ENCODE measurements at regions of chr3 and their contacts with region 1.

Region 1: GRCh38 chr3:157136647-157137387 is 23.1 kb downstream of the CCNL1 start:
- DNase-seq: no peak
- ATAC-seq: peak; percentile 16
- H3K4me3 ChIP-seq: no peak overlapping the region
- H3K4me3 Mint-ChIP-seq: no peak overlapping the region
- H3K27ac ChIP-seq: peak overlapping the region in 1 of 2 experiments; percentile 13
- H3K27ac Mint-ChIP-seq: peak overlapping the region; percentile 74
- H3K4me1 ChIP-seq: peaks cover 17% of the 10 kb centered on the region
- H3K4me1 Mint-ChIP-seq: peaks cover 37% of the 10 kb centered on the region
- H3K27me3 ChIP-seq: no peaks in the 10 kb centered on the region
- H3K27me3 Mint-ChIP-seq: no peaks in the 10 kb centered on the region
- CTCF ChIP-seq: no peak

Region 2: GRCh38 chr3:156449712-156450574 is 686.9 kb before region 1 on chr3:
- CTCF ChIA-PET with region 1: interaction called, 3 read pairs
- POLR2A ChIA-PET with region 1: no interaction called
- intact Hi-C with region 1: loop called (anchors 1 to 5 kb)
- DNase-seq: peak in 2 of 9 experiments; percentile 16 to 29
- ATAC-seq: no peak
- H3K4me3 ChIP-seq: no peak overlapping the region
- H3K4me3 Mint-ChIP-seq: no peak overlapping the region
- H3K27ac ChIP-seq: no peak overlapping the region
- H3K27ac Mint-ChIP-seq: no peak overlapping the region
- H3K4me1 ChIP-seq: no peaks in the 10 kb centered on the region
- H3K4me1 Mint-ChIP-seq: no peaks in the 10 kb centered on the region
- H3K27me3 ChIP-seq: no peaks in the 10 kb centered on the region
- H3K27me3 Mint-ChIP-seq: no peaks in the 10 kb centered on the region
- CTCF ChIP-seq: peak; percentile 14

Region 3: GRCh38 chr3:156542715-156543555 is 593.9 kb before region 1 on chr3:
- CTCF ChIA-PET with region 1: interaction called, 12 read pairs
- POLR2A ChIA-PET with region 1: no interaction called
- intact Hi-C with region 1: loop called (anchors 2 to 5 kb)
- DNase-seq: no peak
- ATAC-seq: no peak
- H3K4me3 ChIP-seq: no peak overlapping the region
- H3K4me3 Mint-ChIP-seq: no peak overlapping the region
- H3K27ac ChIP-seq: no peak overlapping the region
- H3K27ac Mint-ChIP-seq: no peak overlapping the region
- H3K4me1 ChIP-seq: no peaks in the 10 kb centered on the region
- H3K4me1 Mint-ChIP-seq: peaks cover 15% of the 10 kb centered on the region
- H3K27me3 ChIP-seq: no peaks in the 10 kb centered on the region
- H3K27me3 Mint-ChIP-seq: no peaks in the 10 kb centered on the region
- CTCF ChIP-seq: no peak

Region 4: GRCh38 chr3:157081681-157082210 is 55.1 kb before region 1 on chr3:
- CTCF ChIA-PET with region 1: interaction called, 35 read pairs
- POLR2A ChIA-PET with region 1: interaction called, 3 read pairs
- intact Hi-C with region 1: no loop called
- DNase-seq: peak; percentile 74 to 94 (median 89)
- ATAC-seq: peak; percentile 96
- H3K4me3 ChIP-seq: no peak overlapping the region
- H3K4me3 Mint-ChIP-seq: no peak overlapping the region
- H3K27ac ChIP-seq: peak overlapping the region in 1 of 2 experiments; percentile 17
- H3K27ac Mint-ChIP-seq: peak overlapping the region; percentile 74
- H3K4me1 ChIP-seq: peaks cover 9% of the 10 kb centered on the region
- H3K4me1 Mint-ChIP-seq: peaks cover 11% of the 10 kb centered on the region
- H3K27me3 ChIP-seq: no peaks in the 10 kb centered on the region
- H3K27me3 Mint-ChIP-seq: no peaks in the 10 kb centered on the region
- CTCF ChIP-seq: peak; percentile 90

Region 5: DNA sequence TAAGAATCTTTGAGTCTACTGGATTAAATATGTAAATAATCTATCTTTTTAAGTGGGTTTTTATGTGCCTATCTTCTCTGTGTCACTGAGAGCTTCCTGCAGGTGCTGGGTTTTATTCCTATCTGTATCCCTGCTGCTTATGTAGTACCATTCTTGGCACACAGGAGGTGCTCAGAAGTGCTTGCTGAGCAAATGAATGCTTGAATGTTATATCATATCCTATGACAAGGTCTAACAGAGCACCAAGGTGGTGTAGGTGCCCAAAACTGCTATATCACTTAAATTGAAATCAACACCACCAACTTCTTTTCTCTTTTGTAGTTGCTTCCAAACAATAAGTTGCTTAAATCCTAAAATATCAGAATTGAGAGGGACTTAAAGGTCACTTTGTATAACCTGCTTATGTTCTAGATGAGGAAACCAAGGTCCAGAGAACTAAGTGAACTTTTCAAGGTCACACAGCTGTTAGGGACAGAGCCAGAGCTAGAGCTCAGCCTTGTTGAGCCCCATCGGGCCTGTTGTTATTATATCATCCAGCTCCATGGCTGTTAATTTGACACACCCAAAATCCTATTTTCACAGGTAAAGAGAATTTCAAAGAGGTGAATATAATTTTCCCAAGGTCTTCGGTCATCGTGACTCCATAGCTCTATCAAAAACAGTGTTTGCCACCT is 22.8 kb before region 1 on chr3:
- CTCF ChIA-PET with region 1: interaction called, 13 read pairs
- POLR2A ChIA-PET with region 1: no interaction called
- intact Hi-C with region 1: no loop called
- DNase-seq: peak in 2 of 9 experiments; percentile 38 to 52
- ATAC-seq: peak; percentile 90
- H3K4me3 ChIP-seq: no peak overlapping the region
- H3K4me3 Mint-ChIP-seq: no peak overlapping the region
- H3K27ac ChIP-seq: no peak overlapping the region
- H3K27ac Mint-ChIP-seq: no peak overlapping the region
- H3K4me1 ChIP-seq: no peaks in the 10 kb centered on the region
- H3K4me1 Mint-ChIP-seq: no peaks in the 10 kb centered on the region
- H3K27me3 ChIP-seq: no peaks in the 10 kb centered on the region
- H3K27me3 Mint-ChIP-seq: no peaks in the 10 kb centered on the region
- CTCF ChIP-seq: no peak

Region 6: GRCh38 chr3:157159762-157160657 is 23.2 kb after region 1 on chr3 and contains the start of gene CCNL1:
- CTCF ChIA-PET with region 1: interaction called, 19 read pairs
- POLR2A ChIA-PET with region 1: interaction called, 10 read pairs
- intact Hi-C with region 1: no loop called
- DNase-seq: peak; percentile 92 to 99 (median 95)
- ATAC-seq: peak; percentile 70
- H3K4me3 ChIP-seq: peak within 1 kb of the TSS; percentile 79 to 84
- H3K4me3 Mint-ChIP-seq: peak within 1 kb of the TSS; percentile 96
- H3K27ac ChIP-seq: peak within 1 kb of the TSS; percentile 99 to 100
- H3K27ac Mint-ChIP-seq: peak within 1 kb of the TSS; percentile 100
- H3K4me1 ChIP-seq: peaks cover 50% of the 10 kb centered on the region
- H3K4me1 Mint-ChIP-seq: peaks cover 54% of the 10 kb centered on the region
- H3K27me3 ChIP-seq: no peaks in the 10 kb centered on the region
- H3K27me3 Mint-ChIP-seq: no peaks in the 10 kb centered on the region
- CTCF ChIP-seq: no peak
- total RNA-seq, gene CCNL1: 1,161 to 1,206 TPM

Region 7: DNA sequence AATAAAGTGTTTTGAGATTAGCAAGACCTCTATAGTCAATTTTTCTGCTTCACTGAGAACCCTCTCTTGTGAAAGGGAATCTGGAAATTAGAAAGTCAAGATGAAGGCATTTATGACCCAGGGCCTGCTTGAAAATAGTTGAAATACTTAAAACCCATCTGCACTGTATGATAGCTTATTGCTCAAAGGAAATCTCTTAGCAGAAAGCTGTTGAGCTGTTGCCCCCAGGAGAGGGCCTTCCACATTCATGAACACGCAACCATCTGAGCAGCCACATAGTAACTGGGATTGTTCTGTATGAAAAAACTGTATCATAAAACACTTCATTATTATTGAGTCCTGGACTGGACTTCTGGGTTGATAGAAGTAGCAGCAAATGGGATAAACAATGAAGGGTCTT is 193.4 kb after region 1 on chr3:
- CTCF ChIA-PET with region 1: no interaction called
- POLR2A ChIA-PET with region 1: no interaction called
- intact Hi-C with region 1: no loop called
- DNase-seq: no peak
- ATAC-seq: no peak
- H3K4me3 ChIP-seq: no peak overlapping the region
- H3K4me3 Mint-ChIP-seq: no peak overlapping the region
- H3K27ac ChIP-seq: no peak overlapping the region
- H3K27ac Mint-ChIP-seq: no peak overlapping the region
- H3K4me1 ChIP-seq: no peaks in the 10 kb centered on the region
- H3K4me1 Mint-ChIP-seq: peaks cover 2% of the 10 kb centered on the region
- H3K27me3 ChIP-seq: no peaks in the 10 kb centered on the region
- H3K27me3 Mint-ChIP-seq: no peaks in the 10 kb centered on the region
- CTCF ChIP-seq: no peak

Region 8: DNA sequence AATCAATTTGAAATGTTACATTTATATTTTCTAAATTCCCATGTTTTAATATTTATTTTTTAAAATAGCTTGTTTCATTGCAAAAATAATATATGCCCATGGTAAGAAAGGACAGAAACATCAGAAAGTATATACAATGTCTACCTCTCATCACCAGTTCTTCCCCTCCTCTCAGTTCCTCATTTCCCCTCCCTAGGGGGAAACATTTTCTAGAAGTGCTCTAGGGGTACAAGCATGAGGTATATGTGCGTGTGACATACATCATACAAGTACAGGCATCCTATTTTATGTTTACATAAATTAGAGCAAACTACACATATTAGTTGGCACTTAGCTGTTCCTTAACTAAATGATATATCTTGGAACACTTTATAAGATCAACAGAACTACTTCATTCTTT is 555.7 kb after region 1 on chr3:
- CTCF ChIA-PET with region 1: no interaction called
- POLR2A ChIA-PET with region 1: no interaction called
- intact Hi-C with region 1: no loop called
- DNase-seq: no peak
- ATAC-seq: no peak
- H3K4me3 ChIP-seq: no peak overlapping the region
- H3K4me3 Mint-ChIP-seq: no peak overlapping the region
- H3K27ac ChIP-seq: no peak overlapping the region
- H3K27ac Mint-ChIP-seq: no peak overlapping the region
- H3K4me1 ChIP-seq: no peaks in the 10 kb centered on the region
- H3K4me1 Mint-ChIP-seq: no peaks in the 10 kb centered on the region
- H3K27me3 ChIP-seq: no peaks in the 10 kb centered on the region
- H3K27me3 Mint-ChIP-seq: no peaks in the 10 kb centered on the region
- CTCF ChIP-seq: no peak

Region 9: DNA sequence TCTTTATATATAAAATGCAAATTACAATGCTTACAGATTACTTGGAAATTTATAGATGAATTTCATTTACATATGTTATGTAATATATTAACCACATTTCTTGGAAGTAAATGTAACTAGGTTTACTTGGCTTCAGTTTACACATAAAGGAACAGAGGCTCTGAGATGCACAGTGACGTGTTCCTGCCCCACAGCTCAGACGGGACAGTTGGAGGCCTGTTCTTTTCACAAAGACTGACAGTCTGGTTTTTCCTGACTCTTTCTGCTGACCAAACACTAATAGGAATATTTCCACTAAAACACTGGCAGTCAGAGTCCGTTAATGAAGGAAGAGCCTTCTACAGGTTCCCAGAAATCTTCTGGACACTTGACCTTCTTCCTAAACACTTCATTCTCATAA is 2001.1 kb after region 1 on chr3:
- CTCF ChIA-PET with region 1: no interaction called
- POLR2A ChIA-PET with region 1: no interaction called
- intact Hi-C with region 1: no loop called
- DNase-seq: no peak
- ATAC-seq: no peak
- H3K4me3 ChIP-seq: no peak overlapping the region
- H3K4me3 Mint-ChIP-seq: no peak overlapping the region
- H3K27ac ChIP-seq: no peak overlapping the region
- H3K27ac Mint-ChIP-seq: no peak overlapping the region
- H3K4me1 ChIP-seq: no peaks in the 10 kb centered on the region
- H3K4me1 Mint-ChIP-seq: no peaks in the 10 kb centered on the region
- H3K27me3 ChIP-seq: no peaks in the 10 kb centered on the region
- H3K27me3 Mint-ChIP-seq: no peaks in the 10 kb centered on the region
- CTCF ChIP-seq: no peak